Thyroid gland (tissue), 4 donors: ENCODE measurements at regions of chr1 and their contacts with region 1.

Region 1: DNA sequence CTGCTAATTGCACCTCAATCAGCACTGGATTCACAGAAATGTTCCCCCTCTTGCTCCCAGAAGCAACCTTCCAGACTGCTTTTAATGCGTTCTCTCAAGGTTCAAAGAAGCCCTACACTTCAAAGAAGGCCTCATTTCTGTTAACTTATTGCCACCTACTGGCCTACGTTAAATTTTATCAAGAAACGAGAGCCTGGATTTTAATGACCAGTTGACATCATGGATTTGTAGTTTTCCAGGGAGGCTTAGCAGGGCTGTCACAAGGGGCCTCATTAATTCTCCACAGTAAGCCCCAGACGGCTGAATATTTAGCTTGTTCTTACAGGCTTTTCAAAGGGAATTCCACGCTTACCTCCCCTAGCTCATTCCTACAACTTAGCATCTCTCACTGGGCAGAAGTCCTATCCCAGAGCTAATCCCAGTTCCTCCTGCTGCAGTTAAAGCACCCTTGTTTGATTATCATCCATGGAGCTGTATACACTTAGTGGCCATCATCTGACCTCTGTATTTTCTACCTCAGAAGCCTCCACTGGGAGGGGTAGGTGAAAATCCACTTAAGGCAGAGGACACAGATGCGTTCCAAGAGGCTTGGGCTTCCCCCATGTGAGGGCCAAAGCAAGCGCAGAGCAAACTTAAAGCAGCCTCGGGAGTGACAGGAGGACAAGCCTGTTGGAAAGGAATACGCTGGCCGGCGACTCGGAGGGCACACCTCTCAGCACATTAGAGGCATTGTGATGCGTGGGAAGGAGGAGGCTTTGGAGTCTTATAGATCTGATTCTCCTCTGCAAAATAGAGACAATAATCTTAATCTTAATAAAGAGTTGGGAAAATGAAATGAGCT is 32.2 kb upstream of the CYP4X1 start:
- DNase-seq: no peak
- H3K4me3 ChIP-seq: no peak overlapping the region
- H3K27ac ChIP-seq: no peak overlapping the region
- H3K4me1 ChIP-seq: no peaks in the 10 kb centered on the region
- H3K27me3 ChIP-seq: no peaks in the 10 kb centered on the region
- CTCF ChIP-seq: peak in 4 of 6 experiments; percentile 34 to 65 (median 50)
- POLR2A ChIP-seq: no peak

Region 2: DNA sequence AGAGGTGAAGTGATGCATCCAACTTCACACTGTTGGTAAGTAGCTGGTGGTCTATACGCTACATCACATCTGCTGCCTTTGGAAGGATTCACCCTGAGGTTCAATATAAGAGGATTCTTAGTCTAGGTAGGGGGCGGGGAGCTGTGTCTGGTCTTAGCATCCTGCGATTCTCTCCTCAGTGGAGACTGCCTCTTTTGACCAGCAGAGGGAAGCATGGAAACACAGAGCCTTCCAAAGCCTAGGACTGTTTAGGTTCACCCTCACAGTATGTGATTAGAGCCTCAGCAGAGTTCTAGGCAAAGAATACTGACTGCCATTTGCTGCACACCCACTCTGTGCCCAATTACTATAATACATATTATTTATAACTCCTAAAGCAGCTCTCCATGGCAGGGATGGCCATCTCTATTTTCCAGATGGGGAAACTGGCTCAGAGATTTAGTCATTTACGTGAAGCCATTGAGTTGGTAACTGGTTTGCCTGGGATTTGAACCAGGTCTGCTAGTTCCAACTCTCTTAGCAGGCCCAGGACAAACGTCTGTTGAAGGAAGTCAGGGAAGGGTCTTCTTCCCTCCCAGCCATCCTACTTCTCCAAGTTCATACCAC is 243.5 kb before region 1 on chr1:
- intact Hi-C with region 1: loop called (anchors 5 kb)
- DNase-seq: peak; percentile 69 to 70
- H3K4me3 ChIP-seq: no peak overlapping the region
- H3K27ac ChIP-seq: no peak overlapping the region
- H3K4me1 ChIP-seq: peaks cover 14 to 16% of the 10 kb centered on the region in 2 donors
- H3K27me3 ChIP-seq: no peaks in the 10 kb centered on the region
- CTCF ChIP-seq: peak; percentile 68 to 89 (median 84)
- POLR2A ChIP-seq: no peak